GM12878 (cell line): ENCODE measurements at regions of chr2 and their contacts with region 1.

Region 1: DNA sequence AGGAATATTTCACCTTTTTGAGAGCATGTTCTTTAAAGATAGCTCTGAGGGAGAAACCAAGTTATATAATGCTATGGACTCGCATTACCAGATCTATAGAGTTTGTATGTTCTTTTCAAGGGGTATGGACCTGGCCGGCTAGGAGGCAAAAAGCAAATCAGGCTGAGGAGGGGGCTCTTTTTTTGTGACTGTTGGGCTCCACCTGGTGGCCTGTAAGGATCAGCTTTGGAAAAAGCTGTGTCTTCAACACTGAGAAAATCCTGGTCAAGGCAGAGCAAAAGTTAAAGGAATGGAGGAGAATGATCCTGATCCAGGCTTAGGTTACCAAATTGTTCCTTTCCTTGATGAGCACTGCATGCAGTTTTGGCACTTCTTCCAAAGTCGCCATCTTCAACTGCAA is 180.5 kb downstream of the DIS3L2 start:
- DNase-seq: no peak
- ATAC-seq: peak; percentile 63
- H3K4me3 ChIP-seq: no peak overlapping the region
- H3K27ac ChIP-seq: no peak overlapping the region
- H3K4me1 ChIP-seq: no peaks in the 10 kb centered on the region
- H3K27me3 ChIP-seq: no peaks in the 10 kb centered on the region
- CTCF ChIP-seq: peak; percentile 55 to 63 (median 62); a peak in 5 of 6 replicates
- EP300 ChIP-seq: no peak
- POLR2A ChIP-seq: no peak
- RAD21 ChIP-seq: peak; percentile 79

Region 2: GRCh38 chr2:231900486-231900942 is 241.5 kb before region 1 on chr2:
- CTCF ChIA-PET with region 1: interaction called, 17 read pairs
- POLR2A ChIA-PET with region 1: no interaction called
- RAD21 ChIA-PET with region 1: no interaction called
- SMC1A ChIA-PET with region 1: interaction called, 9 read pairs
- in situ Hi-C with region 1: no loop called
- intact Hi-C with region 1: no loop called
- DNase-seq: no peak
- ATAC-seq: peak; percentile 100
- H3K4me3 ChIP-seq: no peak overlapping the region
- H3K27ac ChIP-seq: no peak overlapping the region
- H3K4me1 ChIP-seq: no peaks in the 10 kb centered on the region
- H3K27me3 ChIP-seq: no peaks in the 10 kb centered on the region; a peak in 2 of 4 replicates
- CTCF ChIP-seq: peak; percentile 73 to 99 (median 76)
- EP300 ChIP-seq: no peak
- POLR2A ChIP-seq: no peak
- RAD21 ChIP-seq: peak; percentile 30; the same call in 1 of the 2 replicates

Region 3: GRCh38 chr2:231907787-231908186 is 234.3 kb before region 1 on chr2:
- CTCF ChIA-PET with region 1: interaction called, 24 read pairs
- POLR2A ChIA-PET with region 1: no interaction called
- RAD21 ChIA-PET with region 1: interaction called, 3 read pairs
- SMC1A ChIA-PET with region 1: interaction called, 5 read pairs
- in situ Hi-C with region 1: no loop called
- intact Hi-C with region 1: loop called (anchors 1 kb)
- DNase-seq: no peak
- ATAC-seq: no peak
- H3K4me3 ChIP-seq: no peak overlapping the region
- H3K27ac ChIP-seq: no peak overlapping the region
- H3K4me1 ChIP-seq: no peaks in the 10 kb centered on the region
- H3K27me3 ChIP-seq: no peaks in the 10 kb centered on the region; a peak in 1 of 4 replicates
- CTCF ChIP-seq: no peak
- EP300 ChIP-seq: no peak
- POLR2A ChIP-seq: no peak
- RAD21 ChIP-seq: no peak

Region 4: GRCh38 chr2:231925303-231926179 is 216.5 kb before region 1 on chr2:
- CTCF ChIA-PET with region 1: interaction called, 32 read pairs
- POLR2A ChIA-PET with region 1: no interaction called
- RAD21 ChIA-PET with region 1: interaction called, 3 read pairs
- SMC1A ChIA-PET with region 1: interaction called, 11 read pairs
- in situ Hi-C with region 1: loop called (anchors 5 kb)
- intact Hi-C with region 1: loop called (anchors 1 kb)
- DNase-seq: no peak
- ATAC-seq: peak; percentile 92
- H3K4me3 ChIP-seq: peak overlapping the region; percentile 74; the same call in 1 of the 2 replicates
- H3K27ac ChIP-seq: no peak overlapping the region
- H3K4me1 ChIP-seq: peaks cover 13% of the 10 kb centered on the region
- H3K27me3 ChIP-seq: peaks cover 6 to 11% of the 10 kb centered on the region in 2 experiments; a peak in 3 of 4 replicates
- CTCF ChIP-seq: peak; percentile 70 to 75 (median 70)
- EP300 ChIP-seq: no peak
- POLR2A ChIP-seq: no peak
- RAD21 ChIP-seq: peak; percentile 64

Region 5: DNA sequence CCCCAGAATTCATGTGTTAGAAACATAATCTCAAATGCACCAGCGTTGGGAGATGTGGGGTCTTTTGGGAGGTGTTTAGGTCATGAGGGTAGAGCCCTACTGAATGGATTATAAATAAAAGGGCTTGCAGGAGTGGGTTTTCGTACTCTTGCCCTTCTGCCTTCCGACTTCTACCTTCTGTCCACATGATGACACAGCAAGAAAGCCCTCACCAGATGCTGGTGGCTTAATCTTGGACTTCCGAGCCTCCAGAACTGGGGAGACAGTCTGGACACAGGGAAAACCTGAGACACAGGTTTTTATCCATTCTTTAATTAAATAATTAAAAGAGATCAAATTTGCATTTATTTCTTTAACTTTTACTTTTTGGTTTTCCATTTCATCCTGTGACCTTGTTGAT is 92.7 kb before region 1 on chr2:
- CTCF ChIA-PET with region 1: no interaction called
- POLR2A ChIA-PET with region 1: no interaction called
- RAD21 ChIA-PET with region 1: no interaction called
- SMC1A ChIA-PET with region 1: no interaction called
- in situ Hi-C with region 1: no loop called
- intact Hi-C with region 1: no loop called
- DNase-seq: no peak
- ATAC-seq: no peak
- H3K4me3 ChIP-seq: no peak overlapping the region
- H3K27ac ChIP-seq: no peak overlapping the region
- H3K4me1 ChIP-seq: no peaks in the 10 kb centered on the region
- H3K27me3 ChIP-seq: no peaks in the 10 kb centered on the region
- CTCF ChIP-seq: no peak
- EP300 ChIP-seq: no peak
- POLR2A ChIP-seq: no peak
- RAD21 ChIP-seq: no peak

Region 6: GRCh38 chr2:232075080-232075479 is 67.0 kb before region 1 on chr2:
- CTCF ChIA-PET with region 1: no interaction called
- POLR2A ChIA-PET with region 1: no interaction called
- RAD21 ChIA-PET with region 1: no interaction called
- SMC1A ChIA-PET with region 1: no interaction called
- in situ Hi-C with region 1: no loop called
- intact Hi-C with region 1: no loop called
- DNase-seq: no peak
- ATAC-seq: no peak
- H3K4me3 ChIP-seq: no peak overlapping the region
- H3K27ac ChIP-seq: no peak overlapping the region
- H3K4me1 ChIP-seq: 0 out of 2 replicates have a peak, but pooled peaks cover 4% of the 10 kb centered on the region
- H3K27me3 ChIP-seq: no peaks in the 10 kb centered on the region
- CTCF ChIP-seq: no peak
- EP300 ChIP-seq: no peak
- POLR2A ChIP-seq: no peak
- RAD21 ChIP-seq: no peak

Region 7: DNA sequence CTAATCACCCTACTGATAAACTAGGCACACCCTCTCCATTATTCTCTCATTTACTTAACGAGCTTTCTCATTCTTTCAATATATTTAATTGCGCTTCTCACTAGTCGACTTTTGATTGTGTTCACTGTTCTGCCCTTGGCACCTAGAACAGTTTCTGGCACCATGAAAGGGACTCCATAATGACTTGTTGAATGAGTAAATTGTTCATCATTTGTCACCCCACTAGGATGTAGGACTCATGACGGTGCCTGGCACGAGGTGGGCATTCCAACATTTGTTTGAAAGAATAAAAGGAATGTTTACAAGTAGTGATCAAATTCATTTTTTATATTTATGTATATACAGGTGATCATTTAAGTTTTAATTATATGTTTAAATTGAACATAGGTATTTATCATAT is 56.9 kb before region 1 on chr2:
- CTCF ChIA-PET with region 1: no interaction called
- POLR2A ChIA-PET with region 1: no interaction called
- RAD21 ChIA-PET with region 1: no interaction called
- SMC1A ChIA-PET with region 1: no interaction called
- in situ Hi-C with region 1: loop called (anchors 5 kb)
- intact Hi-C with region 1: no loop called
- DNase-seq: no peak
- ATAC-seq: no peak
- H3K4me3 ChIP-seq: no peak overlapping the region
- H3K27ac ChIP-seq: no peak overlapping the region
- H3K4me1 ChIP-seq: no peaks in the 10 kb centered on the region
- H3K27me3 ChIP-seq: no peaks in the 10 kb centered on the region
- CTCF ChIP-seq: no peak
- EP300 ChIP-seq: no peak
- POLR2A ChIP-seq: no peak
- RAD21 ChIP-seq: no peak

Region 8: GRCh38 chr2:232327105-232328041 is 185.3 kb after region 1 on chr2:
- CTCF ChIA-PET with region 1: interaction called, 8 read pairs
- POLR2A ChIA-PET with region 1: no interaction called
- RAD21 ChIA-PET with region 1: no interaction called
- SMC1A ChIA-PET with region 1: interaction called, 4 read pairs
- in situ Hi-C with region 1: no loop called
- intact Hi-C with region 1: loop called (anchors 10 kb)
- DNase-seq: no peak
- ATAC-seq: peak; percentile 90
- H3K4me3 ChIP-seq: no peak overlapping the region
- H3K27ac ChIP-seq: no peak overlapping the region
- H3K4me1 ChIP-seq: peaks cover 10% of the 10 kb centered on the region
- H3K27me3 ChIP-seq: no peaks in the 10 kb centered on the region
- CTCF ChIP-seq: peak; percentile 61 to 84 (median 81)
- EP300 ChIP-seq: no peak
- POLR2A ChIP-seq: no peak
- RAD21 ChIP-seq: peak; percentile 81

Region 9: DNA sequence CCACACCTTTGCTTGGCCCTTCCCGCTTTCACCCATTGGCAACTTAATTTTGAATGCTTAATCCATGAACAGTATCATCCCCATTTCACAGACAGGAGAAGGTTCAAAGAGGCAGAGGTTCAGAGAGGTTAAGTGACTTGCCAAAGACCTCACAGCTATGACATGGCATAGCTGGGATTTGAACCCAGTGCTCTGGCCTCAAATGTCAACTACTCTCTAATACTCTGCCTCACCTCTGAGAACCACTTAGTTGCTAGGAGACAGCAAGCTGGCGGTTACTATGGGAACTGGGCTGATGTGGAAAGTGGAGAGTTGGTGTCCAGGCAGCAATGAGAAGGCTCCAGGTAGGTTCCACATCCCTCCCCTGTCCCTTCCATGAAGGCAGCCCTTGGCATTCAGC is 362.4 kb after region 1 on chr2:
- CTCF ChIA-PET with region 1: no interaction called
- POLR2A ChIA-PET with region 1: no interaction called
- RAD21 ChIA-PET with region 1: no interaction called
- SMC1A ChIA-PET with region 1: no interaction called
- in situ Hi-C with region 1: no loop called
- intact Hi-C with region 1: no loop called
- DNase-seq: no peak
- ATAC-seq: no peak
- H3K4me3 ChIP-seq: no peak overlapping the region
- H3K27ac ChIP-seq: no peak overlapping the region
- H3K4me1 ChIP-seq: no peaks in the 10 kb centered on the region
- H3K27me3 ChIP-seq: peaks cover 5 to 12% of the 10 kb centered on the region in 2 experiments
- CTCF ChIP-seq: no peak
- EP300 ChIP-seq: no peak
- POLR2A ChIP-seq: no peak
- RAD21 ChIP-seq: no peak